ENCODE measurements at regions of chr4 and their contacts with region 1.

Region 1: DNA sequence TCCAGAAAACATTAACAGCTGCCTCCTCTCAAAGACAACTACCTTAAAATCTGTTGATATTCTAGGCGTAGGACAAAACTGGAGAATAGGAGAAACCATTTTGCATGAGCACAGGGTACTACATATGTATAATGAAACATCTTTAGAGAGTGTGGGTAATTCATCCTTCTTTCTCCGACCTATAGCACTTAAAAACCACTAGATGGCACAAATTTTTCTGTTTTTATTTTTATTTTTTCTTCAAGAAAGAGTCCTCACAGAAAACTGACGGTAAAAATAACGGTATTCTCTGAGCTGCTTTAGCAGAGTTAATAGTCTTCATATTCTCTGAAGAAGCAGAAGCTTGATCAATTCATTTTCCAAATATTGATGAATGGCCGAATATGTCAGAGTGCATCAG is 14.6 kb downstream of the SMIM31 start:
- DNase-seq: peak; percentile 13
- H3K4me3 Mint-ChIP-seq: no peak overlapping the region
- H3K27ac Mint-ChIP-seq: no peak overlapping the region
- H3K4me1 Mint-ChIP-seq: peaks cover 15% of the 10 kb centered on the region
- H3K27me3 Mint-ChIP-seq: peaks cover 27% of the 10 kb centered on the region
- CTCF ChIP-seq: peak; percentile 32

Region 2: GRCh38 chr4:164779811-164780216 is 11.3 kb after region 1 on chr4:
- CTCF ChIA-PET with region 1: interaction called, 70 read pairs
- POLR2A ChIA-PET with region 1: interaction called, 3 read pairs
- intact Hi-C with region 1: no loop called
- DNase-seq: peak; percentile 64
- H3K4me3 Mint-ChIP-seq: no peak overlapping the region
- H3K27ac Mint-ChIP-seq: no peak overlapping the region
- H3K4me1 Mint-ChIP-seq: no peaks in the 10 kb centered on the region
- H3K27me3 Mint-ChIP-seq: no peaks in the 10 kb centered on the region
- CTCF ChIP-seq: peak; percentile 86

Region 3: GRCh38 chr4:164949448-164950143 is 181.1 kb after region 1 on chr4:
- CTCF ChIA-PET with region 1: interaction called, 45 read pairs
- POLR2A ChIA-PET with region 1: no interaction called
- intact Hi-C with region 1: no loop called
- DNase-seq: no peak
- H3K4me3 Mint-ChIP-seq: no peak overlapping the region
- H3K27ac Mint-ChIP-seq: no peak overlapping the region
- H3K4me1 Mint-ChIP-seq: no peaks in the 10 kb centered on the region
- H3K27me3 Mint-ChIP-seq: no peaks in the 10 kb centered on the region
- CTCF ChIP-seq: peak; percentile 32

Region 4: DNA sequence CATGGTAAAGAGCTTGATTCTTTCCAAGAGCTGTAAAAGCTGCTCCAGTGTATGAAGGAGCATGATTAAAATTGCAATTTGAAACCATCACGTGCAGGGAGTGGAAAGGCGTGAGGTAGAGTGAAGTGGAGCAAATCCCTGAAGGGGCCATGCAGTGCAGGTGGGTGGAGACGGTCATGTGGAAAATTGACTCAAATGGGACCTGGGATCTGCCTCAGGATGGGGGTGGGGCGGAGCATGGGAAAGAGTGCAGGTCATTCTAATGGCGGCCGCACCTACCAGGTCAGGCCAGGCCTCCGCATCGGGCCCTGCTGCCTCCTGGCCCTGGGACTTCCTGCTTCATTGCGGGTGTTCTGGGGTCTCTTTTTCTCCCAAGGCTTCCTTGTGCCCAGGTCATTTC is 237.9 kb after region 1 on chr4:
- CTCF ChIA-PET with region 1: interaction called, 10 read pairs
- POLR2A ChIA-PET with region 1: interaction called, 4 read pairs
- intact Hi-C with region 1: no loop called
- DNase-seq: no peak
- H3K4me3 Mint-ChIP-seq: no peak overlapping the region
- H3K27ac Mint-ChIP-seq: no peak overlapping the region
- H3K4me1 Mint-ChIP-seq: no peaks in the 10 kb centered on the region
- H3K27me3 Mint-ChIP-seq: no peaks in the 10 kb centered on the region
- CTCF ChIP-seq: no peak

Measured in MCF 10A (cell line).